Mammary epithelial cell (primary cell): ENCODE measurements at regions of chr11 and their contacts with region 1.

Region 1: DNA sequence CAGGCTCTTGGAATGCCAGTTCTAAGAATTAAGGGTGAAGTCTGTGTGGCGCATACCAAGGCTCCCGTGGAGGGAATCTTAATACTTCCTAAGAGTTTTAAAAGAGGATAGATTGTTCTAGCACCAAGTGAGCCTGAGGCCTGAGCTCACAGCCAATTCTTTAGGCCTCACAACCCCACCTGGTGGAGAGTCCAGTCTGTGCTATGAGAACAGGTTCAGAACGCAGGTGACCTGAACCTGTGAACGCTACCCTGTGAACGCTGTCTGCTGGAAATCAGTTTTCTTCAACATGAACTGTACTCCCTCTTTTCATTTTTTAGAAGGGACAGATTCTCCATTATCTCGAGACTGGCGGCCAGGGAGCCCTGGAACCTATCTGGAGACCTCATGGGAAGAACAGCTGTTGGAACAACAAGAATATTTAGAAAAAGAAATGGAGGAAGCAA is 43.2 kb upstream of the DLAT start:
- DNase-seq: peak; percentile 59
- H3K4me3 ChIP-seq: no peak overlapping the region
- H3K27ac ChIP-seq: no peak overlapping the region
- H3K4me1 ChIP-seq: peaks cover 21% of the 10 kb centered on the region
- H3K27me3 ChIP-seq: no peaks in the 10 kb centered on the region
- CTCF ChIP-seq: peak; percentile 76 to 86

Region 2: DNA sequence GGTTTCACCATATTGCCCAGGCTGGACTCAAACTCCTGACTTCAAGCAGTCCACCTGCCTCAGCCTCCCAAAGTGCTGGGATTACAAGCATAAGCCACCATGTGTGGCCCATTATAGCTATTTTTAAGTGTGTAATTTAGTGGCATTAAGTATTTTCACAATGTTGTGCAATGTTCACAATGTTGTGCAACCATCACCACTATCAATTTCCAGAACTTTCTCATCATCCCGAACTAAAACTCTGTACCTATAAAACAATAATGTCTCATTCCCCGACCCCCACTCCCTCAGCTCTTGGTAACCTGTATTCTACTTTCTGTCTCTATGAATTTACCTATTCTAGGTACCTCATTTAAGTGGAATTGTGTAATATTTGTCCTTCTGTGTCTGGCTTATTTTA is 95.2 kb before region 1 on chr11:
- CTCF ChIA-PET with region 1: no interaction called
- dilution Hi-C with region 1: no loop called
- in situ Hi-C with region 1: no loop called
- intact Hi-C with region 1: no loop called
- DNase-seq: no peak
- H3K4me3 ChIP-seq: no peak overlapping the region
- H3K27ac ChIP-seq: no peak overlapping the region
- H3K4me1 ChIP-seq: no peaks in the 10 kb centered on the region
- H3K27me3 ChIP-seq: no peaks in the 10 kb centered on the region
- CTCF ChIP-seq: no peak

Region 3: DNA sequence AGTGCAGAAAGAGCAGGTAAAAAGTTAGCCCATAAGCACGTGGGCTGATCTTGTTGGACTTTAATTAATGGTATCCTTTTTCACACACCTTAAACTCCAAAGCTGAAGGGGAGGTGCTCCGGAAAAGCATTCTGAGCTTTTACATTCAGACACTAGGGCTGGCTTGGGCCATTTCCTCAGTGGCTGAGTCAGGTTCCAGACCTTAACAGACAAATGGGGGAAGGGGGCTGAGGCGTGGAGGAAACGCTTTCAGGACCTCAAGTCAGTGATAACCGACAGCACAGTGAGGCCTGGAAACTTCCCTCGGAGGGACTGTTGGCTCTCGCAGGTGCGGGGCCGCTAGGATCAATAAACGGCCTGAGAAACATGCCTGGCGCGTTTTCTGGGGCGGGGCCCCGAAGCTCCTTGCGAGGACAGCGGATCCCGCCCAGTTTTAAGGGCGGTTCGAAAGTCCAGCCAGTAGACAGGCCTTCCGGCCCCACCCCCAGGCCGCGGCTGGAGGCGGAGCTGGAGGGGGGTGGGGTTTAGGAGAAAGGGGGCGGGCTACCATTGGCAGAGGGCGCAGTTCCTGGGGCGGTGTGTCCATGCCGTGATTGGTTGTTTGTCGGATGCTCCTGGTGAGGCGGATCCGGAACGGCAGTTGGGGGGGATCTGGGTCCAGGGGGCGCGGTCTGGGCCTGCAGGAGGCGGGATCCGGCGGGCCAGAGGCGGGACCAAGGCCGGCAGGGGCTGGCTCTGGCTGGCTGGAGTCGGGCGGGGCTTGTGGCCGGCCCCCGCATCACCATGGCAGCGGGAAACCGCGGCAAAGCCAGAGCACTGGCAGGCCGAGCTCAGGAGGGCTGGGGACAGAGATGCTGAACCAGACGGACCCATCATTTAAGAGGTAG is 55.3 kb before region 1 on chr11:
- CTCF ChIA-PET with region 1: interaction called, 15 read pairs
- dilution Hi-C with region 1: loop called (anchors 10 kb)
- in situ Hi-C with region 1: no loop called
- intact Hi-C with region 1: loop called (anchors 1 kb)
- DNase-seq: peak; percentile 94
- H3K4me3 ChIP-seq: peak overlapping the region; percentile 26 to 48 (median 37)
- H3K27ac ChIP-seq: peak overlapping the region; percentile 67
- H3K4me1 ChIP-seq: peaks cover 10% of the 10 kb centered on the region
- H3K27me3 ChIP-seq: no peaks in the 10 kb centered on the region
- CTCF ChIP-seq: peak in 1 of 2 donors; percentile 3

Region 4: GRCh38 chr11:111938687-111939160 is 43.3 kb before region 1 on chr11:
- CTCF ChIA-PET with region 1: interaction called, 3 read pairs
- dilution Hi-C with region 1: loop called (anchors 5 kb)
- in situ Hi-C with region 1: loop called in 1 of 2 experiments (anchors 5 kb)
- intact Hi-C with region 1: no loop called
- DNase-seq: peak; percentile 32
- H3K4me3 ChIP-seq: no peak overlapping the region
- H3K27ac ChIP-seq: no peak overlapping the region
- H3K4me1 ChIP-seq: peaks cover 34% of the 10 kb centered on the region
- H3K27me3 ChIP-seq: no peaks in the 10 kb centered on the region
- CTCF ChIP-seq: no peak

Region 5: GRCh38 chr11:111944651-111945051 is 37.4 kb before region 1 on chr11:
- CTCF ChIA-PET with region 1: no interaction called
- dilution Hi-C with region 1: loop called (anchors 5 kb)
- in situ Hi-C with region 1: loop called in 1 of 2 experiments (anchors 5 kb)
- intact Hi-C with region 1: no loop called
- DNase-seq: peak; percentile 88
- H3K4me3 ChIP-seq: no peak overlapping the region
- H3K27ac ChIP-seq: peak overlapping the region; percentile 95
- H3K4me1 ChIP-seq: peaks cover 31% of the 10 kb centered on the region
- H3K27me3 ChIP-seq: no peaks in the 10 kb centered on the region
- CTCF ChIP-seq: no peak

Region 6: GRCh38 chr11:112042161-112042960 is 60.3 kb after region 1 on chr11:
- CTCF ChIA-PET with region 1: no interaction called
- dilution Hi-C with region 1: loop called (anchors 5 kb)
- in situ Hi-C with region 1: no loop called
- intact Hi-C with region 1: no loop called
- DNase-seq: peak; percentile 39
- H3K4me3 ChIP-seq: no peak overlapping the region
- H3K27ac ChIP-seq: peak overlapping the region; percentile 42
- H3K4me1 ChIP-seq: peaks cover 14% of the 10 kb centered on the region
- H3K27me3 ChIP-seq: no peaks in the 10 kb centered on the region
- CTCF ChIP-seq: no peak